Activated CD4-positive, alpha-beta memory T cell treated with anti-CD3 and anti-CD28 coated beads for 36 hours (primary cell): ENCODE measurements at regions of chr7 and their contacts with region 1.

Region 1: DNA sequence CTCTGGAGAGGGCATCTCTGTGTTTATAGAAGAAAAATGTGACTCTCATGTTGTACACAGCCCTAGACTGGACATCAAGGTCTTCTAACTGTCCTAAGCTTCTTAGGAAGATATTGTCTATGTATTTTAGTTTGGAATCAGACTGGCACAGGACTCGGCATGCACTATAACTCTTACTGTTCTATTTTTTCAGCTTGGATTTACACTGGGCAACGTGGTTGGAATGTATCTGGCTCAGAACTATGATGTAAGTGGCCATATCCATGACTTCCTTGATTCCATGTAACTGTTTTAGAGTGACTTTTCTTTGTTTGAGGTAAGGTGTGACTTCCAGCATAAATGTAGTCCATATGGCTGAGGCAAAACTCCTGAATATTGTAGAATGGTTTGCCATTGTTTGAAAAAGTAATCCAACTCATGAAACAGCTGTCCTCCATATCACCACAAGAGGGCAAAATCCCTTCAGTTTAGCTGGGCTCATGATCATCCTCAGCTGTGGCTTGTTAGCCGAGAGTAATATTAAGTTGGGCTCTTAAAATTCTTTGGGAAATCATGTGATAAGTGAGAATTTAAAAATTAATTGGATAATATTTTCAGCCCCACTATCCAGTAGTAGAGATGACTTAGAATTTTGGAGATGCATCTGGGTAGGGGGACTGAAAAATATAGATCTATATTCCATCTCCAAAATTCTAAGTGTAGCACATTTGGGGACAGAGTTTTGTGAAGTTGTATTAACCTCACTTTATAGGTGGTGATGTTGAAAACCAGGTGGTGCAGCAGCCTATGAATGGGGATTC is 10.4 kb downstream of the STMP1 start:
- DNase-seq: no peak
- H3K4me3 Mint-ChIP-seq: no peak overlapping the region
- H3K27ac Mint-ChIP-seq: no peak overlapping the region
- H3K4me1 Mint-ChIP-seq: peaks cover 25% of the 10 kb centered on the region
- H3K27me3 Mint-ChIP-seq: no peaks in the 10 kb centered on the region

Region 2: DNA sequence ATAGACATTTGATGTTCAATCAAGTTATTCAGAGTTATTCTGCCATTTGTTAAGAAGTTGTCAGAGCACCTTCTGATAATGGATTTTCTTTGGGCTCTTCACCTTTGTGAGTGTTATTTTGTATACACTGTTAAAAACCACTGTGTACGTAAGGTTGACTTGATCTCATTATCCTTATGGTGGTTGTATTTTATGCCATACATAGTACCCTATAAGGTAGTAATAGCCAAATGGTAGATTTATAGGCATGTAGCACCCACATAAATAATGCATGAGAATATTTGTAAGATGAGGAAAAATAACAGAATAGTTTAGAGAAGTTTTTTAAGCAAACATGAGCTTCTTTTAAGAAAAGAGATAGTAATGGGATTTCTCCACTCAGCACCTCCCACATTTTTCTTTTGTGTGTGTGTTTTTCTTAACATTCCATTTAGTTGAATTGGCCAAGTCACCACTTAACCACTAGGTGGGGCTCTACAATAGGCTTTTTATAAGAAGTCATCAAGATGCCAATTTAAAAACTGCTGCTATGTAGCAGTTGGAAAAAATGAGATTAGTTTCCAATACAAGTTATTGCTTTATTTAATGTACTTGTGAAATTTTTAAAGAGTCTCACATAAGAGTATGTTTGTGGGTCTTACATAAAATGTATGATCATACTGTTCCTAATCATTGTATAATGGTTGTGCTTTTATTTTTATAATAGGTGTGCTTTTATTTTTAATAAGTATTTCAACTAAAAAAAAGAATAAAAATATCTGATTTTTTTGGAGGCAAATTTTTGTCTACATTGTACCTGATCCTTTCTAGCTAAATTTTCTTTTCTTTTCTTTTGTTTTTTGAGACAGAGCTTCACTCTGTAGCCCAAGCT is 51.5 kb before region 1 on chr7:
- CTCF ChIA-PET with region 1: no interaction called
- POLR2A ChIA-PET with region 1: no interaction called
- intact Hi-C with region 1: no loop called
- DNase-seq: no peak
- H3K4me3 Mint-ChIP-seq: no peak overlapping the region
- H3K27ac Mint-ChIP-seq: no peak overlapping the region
- H3K4me1 Mint-ChIP-seq: peaks cover 3% of the 10 kb centered on the region
- H3K27me3 Mint-ChIP-seq: no peaks in the 10 kb centered on the region

Region 3: DNA sequence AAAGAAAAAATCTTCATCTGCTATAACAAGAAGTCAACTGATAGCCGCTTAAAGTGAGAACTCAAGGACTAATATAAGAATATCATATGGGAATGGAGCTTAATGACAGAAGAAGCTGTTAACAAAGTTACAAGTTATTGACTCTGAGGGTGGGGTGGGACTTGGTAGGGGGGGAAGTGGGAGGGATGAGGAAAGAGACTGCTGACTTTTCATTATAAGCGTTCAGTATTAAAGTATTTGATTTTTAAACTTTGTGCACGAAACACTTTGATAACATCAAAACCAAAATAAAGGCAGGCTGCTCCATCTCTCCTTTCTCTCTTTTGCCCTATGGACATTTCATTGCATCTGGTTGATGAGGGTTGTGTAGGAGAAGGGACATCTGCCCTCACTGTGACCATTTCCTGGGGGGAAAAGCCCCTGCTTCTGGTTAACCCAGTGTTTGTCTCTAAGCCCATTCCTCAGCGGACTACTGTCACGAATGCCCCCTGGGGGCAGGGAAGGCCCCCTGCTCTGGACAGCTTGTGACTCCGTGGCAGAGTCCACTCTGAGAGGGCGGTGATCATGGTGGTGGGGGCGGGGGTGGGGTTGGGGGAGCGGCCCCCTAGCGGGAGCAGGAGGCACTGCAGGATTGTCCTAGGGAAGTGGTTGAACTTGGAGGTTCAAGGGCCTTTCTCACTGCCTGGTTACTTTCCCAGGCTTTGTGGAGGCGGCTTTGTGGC is 37.8 kb after region 1 on chr7:
- CTCF ChIA-PET with region 1: interaction called, 33 read pairs
- POLR2A ChIA-PET with region 1: no interaction called
- intact Hi-C with region 1: loop called (anchors 2 kb)
- DNase-seq: peak; percentile 20
- H3K4me3 Mint-ChIP-seq: no peak overlapping the region
- H3K27ac Mint-ChIP-seq: no peak overlapping the region
- H3K4me1 Mint-ChIP-seq: no peaks in the 10 kb centered on the region
- H3K27me3 Mint-ChIP-seq: no peaks in the 10 kb centered on the region